ENCODE measurements at regions of chr18 and their contacts with region 1.

Region 1: GRCh38 chr18:59070181-59070912 is 69.3 kb upstream of the SEC11C start:
- DNase-seq: peak; percentile 73 to 95
- H3K4me3 ChIP-seq: no peak overlapping the region
- H3K4me1 ChIP-seq: peaks cover 13% of the 10 kb centered on the region
- H3K27me3 ChIP-seq: no peaks in the 10 kb centered on the region

Region 2: GRCh38 chr18:58496937-58497336 is 573.4 kb before region 1 on chr18:
- in situ Hi-C with region 1: no loop called
- DNase-seq: peak; percentile 8 to 39
- H3K4me3 ChIP-seq: no peak overlapping the region
- H3K4me1 ChIP-seq: no peaks in the 10 kb centered on the region; the same call in 1 of the 2 replicates
- H3K27me3 ChIP-seq: peaks cover 11% of the 10 kb centered on the region

Region 3: DNA sequence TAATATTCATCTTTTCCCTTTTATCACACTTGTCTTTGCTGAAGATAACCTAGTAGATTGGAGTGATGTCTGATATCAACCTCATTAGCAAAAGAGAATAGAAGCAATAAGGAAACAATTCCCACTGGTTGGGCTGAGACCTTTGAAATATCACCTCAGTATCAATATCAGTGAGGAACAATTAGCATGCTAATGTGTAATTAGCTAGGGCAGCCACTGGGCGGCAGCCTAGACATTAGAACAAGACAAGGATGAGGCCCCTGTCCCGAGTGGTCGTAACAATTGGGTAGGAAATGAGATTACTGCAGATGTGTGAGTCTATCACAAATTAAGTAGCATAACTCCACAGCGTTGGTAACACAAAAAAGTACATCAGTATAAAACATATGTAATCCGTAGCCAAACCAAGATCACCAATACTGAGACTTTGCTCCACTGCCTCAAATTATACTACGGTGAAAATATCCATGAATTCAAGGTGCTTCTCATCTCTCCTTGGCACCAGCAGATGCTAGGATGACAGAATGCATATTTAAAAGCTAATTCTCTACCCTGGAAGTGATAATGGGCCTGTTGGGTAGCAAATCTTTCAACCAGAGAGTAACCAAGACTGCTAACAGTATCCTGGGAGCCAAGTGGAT is 540.5 kb before region 1 on chr18:
- in situ Hi-C with region 1: loop called (anchors 25 kb)
- DNase-seq: peak; percentile 70 to 82
- H3K4me3 ChIP-seq: no peak overlapping the region
- H3K4me1 ChIP-seq: no peaks in the 10 kb centered on the region
- H3K27me3 ChIP-seq: peaks cover 23% of the 10 kb centered on the region

Region 4: DNA sequence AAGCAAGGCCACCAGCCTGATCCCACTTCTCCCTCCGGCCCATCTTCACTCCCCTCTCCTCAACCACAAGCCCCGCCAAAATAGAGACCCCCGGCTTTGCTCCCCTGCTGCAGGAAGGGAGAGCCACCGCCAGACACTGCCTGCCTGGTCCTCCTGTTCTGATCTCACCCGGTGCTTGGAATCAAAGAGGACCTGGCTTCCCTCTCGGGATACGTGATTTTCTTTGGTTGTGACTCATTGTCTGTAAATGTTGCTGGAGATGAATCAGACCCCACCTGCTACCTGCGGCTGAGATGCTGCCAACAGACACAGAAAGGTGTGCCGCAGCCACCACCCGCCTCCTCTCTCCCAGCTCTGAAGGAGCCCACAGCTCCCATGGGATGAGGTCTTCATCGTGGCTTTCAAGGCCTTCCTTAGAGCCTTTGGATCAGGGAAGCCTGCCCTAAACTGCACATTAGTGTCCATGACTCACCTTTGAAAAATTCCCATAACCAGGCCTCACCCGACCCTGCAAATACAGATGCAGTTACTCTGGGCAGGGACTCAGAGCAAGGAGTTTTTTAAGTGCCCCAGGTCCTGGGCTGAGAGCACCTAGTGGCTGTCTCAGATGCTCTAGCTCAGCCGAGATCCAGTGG is 285.1 kb before region 1 on chr18:
- in situ Hi-C with region 1: loop called (anchors 5 kb)
- DNase-seq: no peak
- H3K4me3 ChIP-seq: no peak overlapping the region
- H3K4me1 ChIP-seq: peaks cover 25% of the 10 kb centered on the region
- H3K27me3 ChIP-seq: no peaks in the 10 kb centered on the region